ENCODE measurements at regions of chr16 and their contacts with region 1.

Region 1: DNA sequence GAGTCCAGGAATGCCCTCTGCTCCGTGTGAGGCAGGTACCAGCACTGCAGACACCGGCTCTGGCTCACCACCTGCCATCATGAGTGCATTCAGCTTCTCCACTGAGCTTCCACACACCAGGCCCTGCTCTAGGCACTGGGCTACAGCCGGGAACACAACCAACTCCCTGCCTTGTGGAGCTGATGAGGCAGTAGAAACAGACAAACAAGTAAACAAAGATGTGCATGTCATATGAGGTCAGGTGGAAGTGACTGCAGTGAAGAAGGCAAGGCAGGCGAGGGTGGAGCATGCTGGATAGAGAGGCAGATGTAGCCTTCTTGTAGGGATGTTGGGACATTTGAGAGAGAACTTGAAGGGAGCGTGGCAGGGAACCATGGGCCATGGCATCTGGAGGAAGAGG is 5.0 kb downstream of the NLRC5 start:
- DNase-seq: no peak
- ATAC-seq: 0 out of 3 replicates have a peak, but pooled peaks have one; percentile 1
- H3K4me3 ChIP-seq: no peak overlapping the region; the same call in 1 of the 2 replicates
- H3K27ac ChIP-seq: peak overlapping the region; percentile 15
- H3K4me1 ChIP-seq: peaks cover 14% of the 10 kb centered on the region
- H3K27me3 ChIP-seq: no peaks in the 10 kb centered on the region
- CTCF ChIP-seq: no peak
- EP300 ChIP-seq: no peak
- POLR2A ChIP-seq: no peak
- RAD21 ChIP-seq: no peak

Region 2: GRCh38 chr16:56980792-56981724 is 13.3 kb before region 1 on chr16:
- CTCF ChIA-PET with region 1: interaction called, 15 read pairs
- POLR2A ChIA-PET with region 1: interaction called, 343 read pairs
- RAD21 ChIA-PET with region 1: interaction called, 473 read pairs
- SMC1A ChIA-PET with region 1: interaction called, 604 read pairs
- in situ Hi-C with region 1: no loop called
- intact Hi-C with region 1: loop called (anchors 1 kb)
- DNase-seq: no peak
- ATAC-seq: peak; percentile 67
- H3K4me3 ChIP-seq: no peak overlapping the region
- H3K27ac ChIP-seq: peak overlapping the region; percentile 41
- H3K4me1 ChIP-seq: peaks cover 48% of the 10 kb centered on the region
- H3K27me3 ChIP-seq: no peaks in the 10 kb centered on the region
- CTCF ChIP-seq: no peak
- EP300 ChIP-seq: no peak
- POLR2A ChIP-seq: no peak
- RAD21 ChIP-seq: no peak